ENCODE measurements at regions of chr15 and their contacts with region 1.

Region 1: GRCh38 chr15:75069301-75069925 is 46.0 kb downstream of the PPCDC start:
- DNase-seq: peak; percentile 39
- H3K4me3 Mint-ChIP-seq: no peak overlapping the region
- H3K27ac Mint-ChIP-seq: no peak overlapping the region
- H3K4me1 Mint-ChIP-seq: peaks cover 36% of the 10 kb centered on the region
- H3K27me3 Mint-ChIP-seq: peaks cover 19% of the 10 kb centered on the region

Region 2: GRCh38 chr15:74978503-74978902 is 90.9 kb before region 1 on chr15:
- CTCF ChIA-PET with region 1: no interaction called
- intact Hi-C with region 1: no loop called
- DNase-seq: peak; percentile 46
- H3K4me3 Mint-ChIP-seq: no peak overlapping the region
- H3K27ac Mint-ChIP-seq: no peak overlapping the region
- H3K4me1 Mint-ChIP-seq: peaks cover 7% of the 10 kb centered on the region
- H3K27me3 Mint-ChIP-seq: peaks cover 7% of the 10 kb centered on the region

Region 3: GRCh38 chr15:75104804-75105535 is 35.6 kb after region 1 on chr15:
- CTCF ChIA-PET with region 1: interaction called, 5 read pairs
- intact Hi-C with region 1: loop called (anchors 5 kb)
- DNase-seq: peak; percentile 44
- H3K4me3 Mint-ChIP-seq: no peak overlapping the region
- H3K27ac Mint-ChIP-seq: no peak overlapping the region
- H3K4me1 Mint-ChIP-seq: peaks cover 24% of the 10 kb centered on the region
- H3K27me3 Mint-ChIP-seq: peaks cover 10% of the 10 kb centered on the region